HEK293T (cell line): ENCODE measurements at regions of chr3 and their contacts with region 1.

Region 1: GRCh38 chr3:129289201-129289921 is 10.7 kb downstream of the HMCES start:
- DNase-seq: no peak

Region 2: DNA sequence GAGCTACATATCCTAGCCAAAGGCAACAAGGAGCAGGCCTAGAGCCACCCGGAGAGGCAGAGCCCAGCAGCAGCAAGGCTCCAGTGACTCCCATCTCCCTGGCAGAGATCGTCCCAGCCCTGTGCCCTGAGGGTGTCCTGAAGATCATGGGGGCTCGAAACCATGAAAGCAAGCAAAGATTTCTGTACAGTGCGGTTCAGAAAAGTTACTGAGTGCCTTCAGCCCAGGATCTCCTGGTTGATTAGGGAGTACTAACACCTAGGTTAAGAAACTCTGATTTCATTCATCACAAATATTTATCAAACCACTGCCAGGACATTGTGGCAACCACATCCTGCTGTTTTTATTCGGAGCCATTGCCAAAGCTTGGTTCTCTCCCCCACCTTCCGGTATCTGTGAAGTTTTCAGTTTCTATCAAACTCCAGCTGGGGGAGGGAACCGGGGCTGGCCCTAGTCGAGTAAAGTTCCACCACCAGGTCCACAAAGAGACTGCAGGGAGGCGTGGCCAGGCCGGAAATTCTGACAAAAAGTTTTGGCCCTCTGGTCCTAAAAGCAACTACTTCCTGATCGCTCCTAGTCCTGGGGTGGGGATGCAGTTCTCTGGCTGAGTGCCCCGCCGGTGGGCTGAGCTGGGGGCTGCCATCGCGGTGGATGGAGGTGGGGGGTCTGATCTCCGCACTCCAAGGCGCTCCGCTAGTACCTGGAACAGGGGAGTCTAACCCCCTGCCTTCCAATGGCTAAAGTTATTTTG is 168.9 kb before region 1 on chr3:
- CTCF ChIA-PET with region 1: no interaction called
- POLR2A ChIA-PET with region 1: no interaction called
- DNase-seq: peak; percentile 73

Region 3: DNA sequence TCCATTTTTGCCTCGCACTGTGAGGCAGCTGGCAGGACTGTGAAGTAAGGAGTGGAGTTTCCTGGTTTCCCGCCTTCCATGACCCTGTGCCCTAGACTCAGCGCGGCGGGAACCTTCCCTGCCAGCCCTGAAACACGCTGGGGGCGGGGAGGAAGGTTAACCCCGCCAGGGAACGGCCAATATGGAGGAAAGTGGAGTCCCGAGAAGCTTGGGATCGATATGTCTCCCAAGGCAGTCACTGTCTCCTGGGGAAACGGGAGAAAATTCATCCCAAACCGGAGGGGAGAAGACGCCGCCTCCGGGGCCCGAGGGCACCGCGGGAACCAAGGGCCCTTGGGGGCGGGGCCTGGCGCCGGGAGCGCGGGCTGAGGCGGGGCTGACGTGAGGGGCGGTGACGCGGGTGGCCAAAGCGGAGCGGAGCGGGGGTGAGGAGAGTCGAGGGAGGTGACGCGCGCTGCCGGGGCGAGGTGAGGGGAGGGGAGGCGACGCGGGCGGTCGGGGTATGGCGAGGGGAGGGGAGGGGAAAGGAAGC is 10.9 kb before region 1 on chr3 and contains the start of gene HMCES:
- CTCF ChIA-PET with region 1: no interaction called
- POLR2A ChIA-PET with region 1: interaction called, 10 read pairs
- DNase-seq: peak; percentile 95